Activated CD4-positive, alpha-beta T cell treated with anti-CD3 and anti-CD28 coated beads, Interleukin-2, amount 10 ng/mL, durations not matched to agents 7 days and 5 days (primary cell): ENCODE measurements at regions of chr7 and their contacts with region 1.

Region 1: GRCh38 chr7:992709-993607 is 10.0 kb downstream of the CYP2W1 start:
- DNase-seq: peak; percentile 97
- H3K4me3 Mint-ChIP-seq: no peak overlapping the region
- H3K27ac Mint-ChIP-seq: no peak overlapping the region
- H3K4me1 Mint-ChIP-seq: peaks cover 4% of the 10 kb centered on the region
- H3K27me3 Mint-ChIP-seq: no peaks in the 10 kb centered on the region

Region 2: DNA sequence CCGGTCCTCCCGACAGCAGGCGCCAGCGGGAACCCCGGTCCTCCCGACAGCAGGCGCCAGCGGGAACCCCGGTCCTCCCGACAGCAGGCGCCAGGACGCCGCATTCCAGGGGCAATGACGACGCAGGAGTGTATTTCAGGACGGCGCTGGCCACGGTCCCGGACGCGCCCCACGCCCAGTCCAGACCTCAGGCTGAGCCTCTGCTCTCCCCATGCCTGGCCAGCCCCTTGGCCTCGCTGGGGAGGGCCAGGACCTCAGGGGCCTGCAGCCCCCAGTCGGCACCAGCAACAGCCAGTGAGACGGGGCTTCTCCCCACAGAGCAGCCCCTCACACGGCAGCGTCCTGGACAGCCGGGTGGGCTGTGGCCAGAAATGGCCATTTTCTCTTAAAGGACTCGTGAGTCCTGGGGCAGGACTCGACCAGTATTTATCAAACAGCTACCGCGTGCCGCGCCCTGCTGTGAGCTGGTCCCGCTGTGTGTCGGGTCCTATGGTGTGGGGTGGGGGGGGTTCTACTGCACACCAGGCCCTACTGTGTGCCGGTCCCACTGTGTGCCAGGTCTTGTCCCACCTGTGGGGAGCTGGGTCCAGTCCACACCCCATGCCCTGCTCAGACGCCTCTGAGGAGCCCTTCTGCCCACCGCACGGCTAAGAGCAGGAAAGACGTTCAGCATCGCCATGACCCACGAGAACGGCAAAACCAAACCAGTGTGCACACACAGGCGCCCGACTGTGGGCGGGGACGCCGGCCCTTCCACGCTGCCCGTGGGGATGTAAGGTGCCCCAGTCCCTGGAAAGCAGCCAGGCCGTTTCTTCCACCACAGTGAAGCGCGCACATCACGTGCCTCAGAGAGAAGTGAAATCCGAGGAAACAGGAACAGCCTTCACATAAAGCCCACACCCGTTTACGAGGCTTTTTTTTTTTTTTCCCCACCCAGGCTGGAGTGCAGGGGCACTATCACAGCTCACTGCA is 83.3 kb before region 1 on chr7:
- CTCF ChIA-PET with region 1: interaction called, 17 read pairs
- POLR2A ChIA-PET with region 1: no interaction called
- DNase-seq: no peak
- H3K4me3 Mint-ChIP-seq: peak overlapping the region; percentile 7
- H3K27ac Mint-ChIP-seq: no peak overlapping the region
- H3K4me1 Mint-ChIP-seq: peaks cover 12% of the 10 kb centered on the region
- H3K27me3 Mint-ChIP-seq: peaks cover 4% of the 10 kb centered on the region

Region 3: GRCh38 chr7:1033546-1034145 is 40.7 kb after region 1 on chr7:
- CTCF ChIA-PET with region 1: no interaction called
- POLR2A ChIA-PET with region 1: no interaction called
- DNase-seq: peak; percentile 35
- H3K4me3 Mint-ChIP-seq: peak overlapping the region; percentile 10
- H3K27ac Mint-ChIP-seq: peak overlapping the region; percentile 82
- H3K4me1 Mint-ChIP-seq: peaks cover 51% of the 10 kb centered on the region
- H3K27me3 Mint-ChIP-seq: no peaks in the 10 kb centered on the region

Region 4: DNA sequence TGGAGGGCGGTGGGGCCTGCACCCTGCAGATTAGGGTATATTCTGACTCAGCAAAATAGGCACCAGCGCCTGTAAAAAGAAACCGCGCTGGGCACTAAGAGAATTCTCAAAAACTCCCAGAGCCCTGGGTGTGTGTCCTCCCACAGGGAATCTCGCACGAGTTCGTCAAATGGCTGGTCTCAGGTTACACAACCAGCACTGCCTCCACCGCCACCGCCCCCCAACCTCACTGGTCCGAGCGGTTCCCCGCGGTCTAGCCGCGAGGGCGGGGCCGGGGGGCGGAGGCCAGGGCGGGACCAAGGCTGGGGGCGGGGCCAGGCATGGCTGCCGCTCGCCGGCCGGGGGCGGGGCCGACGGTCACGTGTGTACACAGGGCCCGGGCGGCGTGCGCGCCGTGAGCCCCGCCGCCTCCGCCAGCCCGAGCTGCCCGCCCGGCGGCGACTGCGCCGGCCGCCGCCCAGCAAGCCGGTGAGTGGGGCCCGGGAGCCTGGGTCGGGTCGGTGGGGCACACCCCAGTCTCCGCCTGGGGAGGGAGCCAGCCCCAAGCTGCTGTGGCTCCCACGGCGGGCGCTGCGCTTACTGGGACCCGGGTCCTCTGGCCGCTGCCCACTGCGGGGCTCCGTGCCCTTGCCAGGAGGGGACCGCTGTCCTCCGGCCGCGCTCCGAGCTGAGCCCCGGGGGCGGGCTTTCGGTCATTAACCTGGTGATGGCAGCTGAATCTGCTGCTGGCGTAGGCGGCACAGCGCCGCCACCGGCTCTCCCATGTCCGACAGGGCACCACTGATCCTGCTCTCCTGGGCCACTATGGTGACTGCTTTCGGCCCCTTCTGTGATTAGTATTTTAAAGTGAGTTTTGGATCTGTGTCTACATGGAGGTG is 51.5 kb after region 1 on chr7 and contains the start of gene GPR146:
- CTCF ChIA-PET with region 1: interaction called, 21 read pairs
- POLR2A ChIA-PET with region 1: no interaction called
- DNase-seq: peak; percentile 90
- H3K4me3 Mint-ChIP-seq: peak within 1 kb of the TSS; percentile 81
- H3K27ac Mint-ChIP-seq: peak within 1 kb of the TSS; percentile 88
- H3K4me1 Mint-ChIP-seq: peaks cover 73% of the 10 kb centered on the region
- H3K27me3 Mint-ChIP-seq: no peaks in the 10 kb centered on the region
- total RNA-seq, gene GPR146: 13.3 to 13.8 TPM

Region 5: DNA sequence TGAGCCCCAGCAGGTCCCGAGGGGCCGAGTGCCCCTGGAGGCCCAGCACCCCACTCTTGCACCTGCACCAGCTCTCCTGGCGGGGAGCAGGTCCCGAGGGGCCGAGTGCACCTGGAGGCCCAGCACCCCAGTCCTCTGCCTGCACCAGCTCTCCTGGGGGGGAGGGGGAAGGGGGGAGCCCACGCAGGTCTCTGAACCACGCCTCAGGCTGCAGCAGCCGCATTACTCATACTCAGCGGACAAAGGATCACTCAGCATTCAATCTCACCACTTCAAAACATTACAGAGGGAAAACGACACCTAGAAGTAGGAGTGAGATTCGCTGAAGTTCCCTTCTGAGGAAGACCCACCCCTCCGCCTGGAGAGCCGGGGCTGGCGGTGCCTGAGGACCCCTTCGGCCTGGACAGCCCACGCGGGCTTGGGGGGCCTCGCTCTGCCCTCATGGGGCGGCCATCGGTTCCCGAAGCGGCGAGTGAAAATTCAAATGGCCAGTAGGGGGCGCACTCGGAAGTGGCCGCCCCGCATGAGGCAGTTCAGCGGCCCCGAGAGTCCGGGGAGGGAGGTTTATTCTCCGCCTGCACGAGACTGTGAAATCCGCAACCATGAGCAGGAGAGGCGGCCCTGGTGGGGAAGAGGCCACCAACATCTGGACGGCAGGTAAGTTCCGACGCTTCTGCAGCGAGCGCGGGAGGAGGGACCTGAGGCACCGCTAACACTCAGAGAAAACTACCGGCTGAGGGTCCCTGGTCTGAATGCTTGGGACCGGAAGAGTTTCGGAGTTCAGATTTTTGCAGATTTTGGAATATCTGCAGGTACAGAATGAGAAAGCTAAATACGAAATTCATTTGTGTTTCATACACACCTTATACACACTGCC is 93.9 kb after region 1 on chr7:
- CTCF ChIA-PET with region 1: interaction called, 26 read pairs
- POLR2A ChIA-PET with region 1: no interaction called
- DNase-seq: peak; percentile 75
- H3K4me3 Mint-ChIP-seq: peak overlapping the region; percentile 58
- H3K27ac Mint-ChIP-seq: no peak overlapping the region
- H3K4me1 Mint-ChIP-seq: peaks cover 12% of the 10 kb centered on the region
- H3K27me3 Mint-ChIP-seq: no peaks in the 10 kb centered on the region

Region 6: DNA sequence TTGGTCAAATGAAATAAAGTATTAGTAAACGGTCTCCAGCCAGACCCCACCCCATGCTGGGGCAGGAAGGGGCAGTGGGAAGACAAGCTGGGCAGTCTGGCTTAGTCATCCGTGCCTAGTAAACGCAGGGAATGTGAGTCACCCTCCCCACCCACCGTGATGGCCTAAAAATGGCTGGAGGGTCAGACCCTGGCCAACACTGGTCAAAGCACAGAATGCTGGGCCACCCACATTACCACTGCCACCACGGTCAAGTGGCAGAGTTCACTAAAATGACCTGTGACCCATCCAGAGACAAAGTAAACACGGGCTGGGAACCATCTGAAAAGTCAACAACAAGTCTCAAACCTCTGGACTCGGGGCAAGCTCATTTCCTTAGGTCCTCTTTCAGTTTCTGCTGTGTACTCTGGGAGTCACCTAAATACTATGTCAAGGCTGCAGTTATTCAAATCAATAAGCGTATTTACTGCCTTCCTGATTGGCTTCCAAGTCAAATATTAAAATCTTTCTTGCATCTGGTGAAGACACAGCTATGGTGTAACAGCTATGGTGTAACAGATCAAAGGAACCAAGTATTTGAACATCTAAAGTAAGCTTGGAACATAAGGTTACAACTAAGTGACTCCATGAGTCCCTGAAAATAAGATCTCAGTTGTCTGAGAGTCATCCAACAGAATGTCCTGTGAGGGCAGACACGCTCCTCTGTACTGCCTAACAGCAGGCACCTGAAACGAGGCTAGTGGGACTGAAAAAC is 164.0 kb after region 1 on chr7:
- CTCF ChIA-PET with region 1: interaction called, 11 read pairs
- POLR2A ChIA-PET with region 1: no interaction called
- DNase-seq: no peak
- H3K4me3 Mint-ChIP-seq: no peak overlapping the region
- H3K27ac Mint-ChIP-seq: no peak overlapping the region
- H3K4me1 Mint-ChIP-seq: peaks cover 24% of the 10 kb centered on the region
- H3K27me3 Mint-ChIP-seq: no peaks in the 10 kb centered on the region

Region 7: DNA sequence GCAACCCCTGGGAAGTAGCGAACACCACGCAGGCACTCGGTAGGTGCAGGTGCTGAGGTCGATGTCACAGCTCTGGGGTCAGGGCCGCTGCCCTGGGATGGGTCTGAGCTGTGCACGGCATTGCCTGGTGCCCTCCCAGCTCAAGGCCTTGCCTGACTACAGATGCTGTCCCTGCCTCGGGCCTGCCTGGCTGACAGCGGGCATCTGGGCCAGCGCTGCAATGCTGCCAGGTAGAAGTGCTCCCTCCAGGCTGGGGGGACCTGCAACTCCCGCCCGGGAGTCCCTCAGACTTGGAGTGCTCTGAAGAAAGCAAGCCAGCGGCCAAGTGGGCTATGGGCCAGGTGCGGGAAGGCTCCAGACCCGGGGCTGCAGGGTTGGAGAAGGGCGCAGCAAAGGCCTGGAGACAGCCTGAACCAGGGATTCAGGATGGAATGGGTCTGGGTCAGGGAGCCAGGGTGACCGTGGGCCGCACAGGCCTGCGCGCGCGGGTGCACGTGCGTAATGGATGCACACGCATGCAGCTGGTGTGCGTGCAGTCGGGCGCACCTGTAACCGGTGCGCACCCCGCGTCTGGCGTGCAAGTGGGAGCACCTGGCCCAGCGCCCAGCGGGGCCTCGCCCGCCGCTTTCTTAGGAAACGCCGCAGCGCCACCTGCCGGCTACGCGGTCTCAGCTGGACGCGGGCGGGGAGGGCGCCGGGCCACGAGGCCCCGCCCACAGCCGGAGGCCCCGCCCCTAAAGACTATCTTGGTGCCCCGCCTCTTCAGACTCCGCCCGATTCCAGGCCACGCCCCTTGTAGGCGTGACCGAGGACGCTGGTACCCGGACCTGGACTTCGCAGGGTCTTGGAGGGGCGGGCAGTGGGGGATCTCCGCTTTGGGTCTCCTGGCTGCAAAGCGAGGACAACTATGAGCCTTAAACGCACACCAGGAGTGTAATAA is 419.6 kb after region 1 on chr7:
- CTCF ChIA-PET with region 1: no interaction called
- POLR2A ChIA-PET with region 1: no interaction called
- DNase-seq: peak; percentile 85
- H3K4me3 Mint-ChIP-seq: no peak overlapping the region
- H3K27ac Mint-ChIP-seq: no peak overlapping the region
- H3K4me1 Mint-ChIP-seq: peaks cover 14% of the 10 kb centered on the region
- H3K27me3 Mint-ChIP-seq: peaks cover 2% of the 10 kb centered on the region